Ovary (tissue), 10 donors: ENCODE measurements at regions of chr3 and their contacts with region 1.

Region 1: GRCh38 chr3:68239542-68239941 is 585.1 kb upstream of the SUCLG2 start:
- DNase-seq: no peak
- H3K4me3 ChIP-seq: no peak overlapping the region
- H3K27ac ChIP-seq: no peak overlapping the region
- H3K4me1 ChIP-seq: no peaks in the 10 kb centered on the region
- H3K27me3 ChIP-seq: no peaks in the 10 kb centered on the region
- CTCF ChIP-seq: no peak
- EP300 ChIP-seq: no peak
- POLR2A ChIP-seq: no peak

Region 2: GRCh38 chr3:67883766-67884165 is 355.8 kb before region 1 on chr3:
- intact Hi-C with region 1: loop called in 1 of 4 experiments (anchors 10 kb)
- DNase-seq: no peak
- H3K4me3 ChIP-seq: no peak overlapping the region
- H3K27ac ChIP-seq: no peak overlapping the region
- H3K4me1 ChIP-seq: no peaks in the 10 kb centered on the region
- H3K27me3 ChIP-seq: no peaks in the 10 kb centered on the region
- CTCF ChIP-seq: no peak
- EP300 ChIP-seq: no peak
- POLR2A ChIP-seq: no peak